ENCODE measurements at regions of chr1 and their contacts with region 1.

Region 1: GRCh38 chr1:39332291-39332690 is 127.8 kb downstream of the MACF1 start:
- DNase-seq: no peak
- ATAC-seq: no peak
- H3K4me3 ChIP-seq: no peak overlapping the region
- H3K27ac ChIP-seq: no peak overlapping the region
- H3K4me1 ChIP-seq: no peaks in the 10 kb centered on the region
- H3K27me3 ChIP-seq: no peaks in the 10 kb centered on the region
- CTCF ChIP-seq: no peak

Region 2: DNA sequence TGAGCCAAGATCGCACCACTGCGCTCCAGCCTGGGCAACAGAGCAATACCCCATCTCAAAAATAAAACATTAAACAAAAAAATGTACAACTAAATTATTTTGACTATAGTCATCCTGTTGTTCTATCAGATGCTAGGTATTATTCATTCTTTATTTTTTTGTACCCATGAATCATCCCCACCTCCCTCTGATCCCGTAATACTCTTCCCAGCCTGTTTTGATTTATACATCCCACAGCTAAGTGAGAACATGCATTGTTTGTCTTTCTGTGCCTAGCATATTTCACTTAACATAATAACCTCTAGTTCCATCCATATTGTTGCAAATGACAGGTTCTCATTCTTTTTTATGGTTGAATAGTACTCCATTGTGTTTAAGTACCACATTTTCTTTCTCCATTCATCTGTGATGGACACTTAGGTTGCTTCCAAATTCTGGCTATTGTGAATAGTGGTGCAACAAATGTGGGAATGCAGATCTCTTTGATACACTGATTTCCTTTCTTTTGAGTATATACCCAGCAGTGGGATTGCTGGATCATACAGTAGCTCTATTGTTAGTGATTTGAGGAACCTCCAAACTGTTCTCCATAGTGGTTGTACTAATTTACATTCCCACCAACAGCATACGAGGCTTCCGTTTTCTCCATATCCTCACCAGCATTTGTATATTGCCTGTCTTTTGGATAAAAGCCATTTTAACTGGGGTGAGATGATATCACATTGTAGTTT is 43.4 kb before region 1 on chr1:
- intact Hi-C with region 1: loop called in 1 of 2 experiments (anchors 5 kb)
- DNase-seq: no peak
- ATAC-seq: no peak
- H3K4me3 ChIP-seq: no peak overlapping the region
- H3K27ac ChIP-seq: no peak overlapping the region
- H3K4me1 ChIP-seq: no peaks in the 10 kb centered on the region
- H3K27me3 ChIP-seq: no peaks in the 10 kb centered on the region
- CTCF ChIP-seq: no peak